Psoas muscle (tissue), 8 donors: ENCODE measurements at regions of chr1 and their contacts with region 1.

Region 1: DNA sequence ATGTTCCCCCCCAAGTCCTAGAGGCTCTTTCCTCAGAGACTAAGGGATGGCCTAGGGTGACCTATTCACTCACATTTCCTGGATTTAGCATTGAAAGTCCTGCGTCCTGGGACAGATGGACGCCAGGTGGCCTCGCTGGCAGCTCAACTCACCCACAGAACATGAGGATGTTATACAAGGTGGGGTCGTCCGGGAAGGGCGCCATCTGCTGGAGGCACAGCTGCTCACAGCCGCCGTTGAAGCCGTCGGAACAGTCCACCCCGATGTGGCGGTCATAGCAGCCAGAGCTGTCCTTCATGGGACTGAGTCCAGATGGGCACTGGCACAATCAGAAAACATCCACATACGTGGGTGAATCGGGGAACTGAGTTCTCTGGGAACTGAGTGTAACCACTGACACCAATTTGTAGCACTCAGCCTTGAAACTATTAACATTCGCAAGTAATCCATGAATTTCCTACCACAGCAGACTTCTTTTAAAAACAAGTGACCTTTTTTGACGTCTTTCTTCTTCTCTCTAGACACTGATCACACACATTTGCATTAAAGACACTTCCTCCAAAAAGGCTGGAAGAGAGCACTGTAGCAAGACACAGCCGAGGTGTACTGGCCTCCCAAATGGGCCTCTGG is 215.4 kb downstream of the ASTN1 start:
- DNase-seq: peak; percentile 39 to 71
- ATAC-seq: peak; percentile 73 to 81 (median 79)
- H3K4me3 ChIP-seq: no peak overlapping the region
- H3K27ac ChIP-seq: no peak overlapping the region
- H3K4me1 ChIP-seq: no peaks in the 10 kb centered on the region
- H3K27me3 ChIP-seq: no peaks in the 10 kb centered on the region
- CTCF ChIP-seq: peak; percentile 69

Region 2: DNA sequence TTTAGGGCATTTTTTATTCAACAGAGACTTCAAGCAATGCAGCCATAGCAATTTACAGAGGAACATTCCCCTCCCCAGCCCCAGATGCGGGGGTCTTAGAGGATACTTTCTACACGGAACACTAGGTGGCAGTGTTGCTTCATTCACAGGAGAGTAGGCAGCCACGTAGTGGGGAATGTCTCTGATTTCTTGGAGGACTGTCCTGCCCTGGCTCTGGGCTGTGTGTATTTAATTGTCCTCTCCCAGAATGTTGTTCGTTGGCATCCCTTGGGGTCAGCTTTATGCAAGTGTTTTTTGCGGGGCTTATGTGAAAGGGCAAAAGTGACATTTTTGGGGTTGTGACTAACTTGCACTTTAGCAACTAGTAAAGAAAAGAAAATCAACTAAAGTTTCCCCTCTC is 389.3 kb before region 1 on chr1:
- intact Hi-C with region 1: no loop called
- DNase-seq: peak in 1 of 2 donors; percentile 27
- ATAC-seq: peak; percentile 89 to 95 (median 94)
- H3K4me3 ChIP-seq: no peak overlapping the region
- H3K27ac ChIP-seq: no peak overlapping the region
- H3K4me1 ChIP-seq: no peaks in the 10 kb centered on the region
- H3K27me3 ChIP-seq: peaks cover 0 to 8% (median 0%) of the 10 kb centered on the region in 3 donors
- CTCF ChIP-seq: peak; percentile 93

Region 3: GRCh38 chr1:176897350-176898236 is 51.6 kb before region 1 on chr1:
- intact Hi-C with region 1: loop called (anchors 2 to 5 kb)
- DNase-seq: peak; percentile 46 to 72
- ATAC-seq: peak; percentile 67 to 86 (median 73)
- H3K4me3 ChIP-seq: peak overlapping the region; percentile 45
- H3K27ac ChIP-seq: no peak overlapping the region
- H3K4me1 ChIP-seq: peaks cover 4% of the 10 kb centered on the region
- H3K27me3 ChIP-seq: peaks cover 0 to 24% (median 7%) of the 10 kb centered on the region in 3 donors
- CTCF ChIP-seq: peak; percentile 63

Region 4: DNA sequence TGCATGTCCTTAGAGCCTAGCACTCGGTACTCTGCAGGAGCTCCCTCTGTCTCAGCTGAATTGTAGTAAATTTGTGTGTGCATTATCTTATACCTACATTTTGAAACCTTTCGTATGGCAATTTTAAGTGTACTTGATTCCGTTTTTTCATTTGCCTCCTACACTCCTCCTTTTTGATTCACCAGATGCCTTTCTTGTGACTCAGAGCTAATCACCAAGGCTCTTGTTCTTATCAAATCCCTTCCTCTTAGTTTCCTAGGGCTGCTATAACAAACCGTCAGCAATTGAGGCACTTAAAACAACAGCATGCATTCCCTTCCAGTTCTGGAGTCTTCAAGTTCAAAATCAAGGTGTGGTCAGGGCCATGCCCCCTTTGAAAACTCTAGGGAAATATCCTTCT is 45.7 kb before region 1 on chr1:
- intact Hi-C with region 1: loop called in 1 of 2 experiments (anchors 5 kb)
- DNase-seq: no peak
- ATAC-seq: no peak
- H3K4me3 ChIP-seq: no peak overlapping the region
- H3K27ac ChIP-seq: no peak overlapping the region
- H3K4me1 ChIP-seq: no peaks in the 10 kb centered on the region
- H3K27me3 ChIP-seq: peaks cover 3 to 34% (median 10%) of the 10 kb centered on the region in 3 donors
- CTCF ChIP-seq: no peak